ENCODE measurements at regions of chr17 and their contacts with region 1.

Region 1: GRCh38 chr17:64420143-64420971 is 28.6 kb upstream of the MILR1 start:
- DNase-seq: peak; percentile 76
- H3K4me3 ChIP-seq: no peak overlapping the region; a peak in 1 of 4 replicates
- H3K27ac ChIP-seq: no peak overlapping the region
- H3K4me1 ChIP-seq: peaks cover 0 to 8% of the 10 kb centered on the region in 2 experiments; a peak in 1 of 4 replicates
- H3K27me3 ChIP-seq: no peaks in the 10 kb centered on the region
- CTCF ChIP-seq: peak; percentile 97
- EP300 ChIP-seq: no peak
- RAD21 ChIP-seq: peak; percentile 91

Region 2: GRCh38 chr17:64291254-64291851 is 129.0 kb before region 1 on chr17:
- CTCF ChIA-PET with region 1: interaction called, 37 read pairs
- POLR2A ChIA-PET with region 1: no interaction called
- DNase-seq: no peak
- H3K4me3 ChIP-seq: no peak overlapping the region
- H3K27ac ChIP-seq: no peak overlapping the region
- H3K4me1 ChIP-seq: no peaks in the 10 kb centered on the region
- H3K27me3 ChIP-seq: no peaks in the 10 kb centered on the region
- CTCF ChIP-seq: peak; percentile 58
- EP300 ChIP-seq: no peak
- RAD21 ChIP-seq: peak; percentile 26

Region 3: DNA sequence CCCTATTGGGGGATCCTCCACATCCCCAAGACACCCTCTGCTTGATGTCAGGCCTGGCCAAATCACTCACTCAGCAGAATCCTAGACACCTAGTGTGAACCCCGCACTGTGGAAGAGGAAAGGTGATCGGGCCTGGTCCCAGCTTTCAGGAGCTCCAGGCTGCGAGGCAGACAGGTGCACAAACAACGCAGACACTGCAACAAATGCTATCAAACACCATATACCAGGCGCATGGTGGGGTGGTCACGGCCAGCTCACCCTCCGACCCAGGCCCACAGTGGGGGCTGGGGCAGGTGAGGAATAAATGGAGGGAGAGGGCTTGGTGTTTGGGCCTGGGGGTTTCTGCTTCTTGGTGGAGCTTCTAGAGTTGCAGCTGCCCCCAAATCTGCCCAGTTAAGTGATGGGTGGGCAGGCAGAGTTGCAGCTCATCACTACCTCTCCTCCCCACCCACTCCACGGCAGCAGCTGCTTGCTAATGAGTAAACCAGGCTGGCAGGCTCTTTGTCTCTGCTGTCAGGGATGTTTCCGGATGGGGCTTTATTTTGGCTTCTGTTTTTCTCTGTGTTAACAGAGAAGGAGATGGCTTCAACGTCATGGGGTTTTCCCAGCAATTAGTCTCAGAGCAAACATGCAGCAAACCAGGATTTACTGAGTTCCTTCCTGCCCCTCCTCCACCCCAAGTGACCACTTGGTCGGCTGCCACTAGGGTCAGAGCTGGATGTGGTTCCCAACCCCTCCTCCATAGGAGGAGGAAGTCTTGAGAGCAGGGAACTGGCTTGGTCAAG is 76.3 kb before region 1 on chr17:
- CTCF ChIA-PET with region 1: interaction called, 19 read pairs
- POLR2A ChIA-PET with region 1: no interaction called
- DNase-seq: no peak
- H3K4me3 ChIP-seq: no peak overlapping the region
- H3K27ac ChIP-seq: peak overlapping the region in 1 of 2 experiments; percentile 11; a peak in 1 of 4 replicates
- H3K4me1 ChIP-seq: peaks cover 8 to 10% of the 10 kb centered on the region in 2 experiments; a peak in 3 of 4 replicates
- H3K27me3 ChIP-seq: no peaks in the 10 kb centered on the region
- CTCF ChIP-seq: no peak
- EP300 ChIP-seq: peak in 1 of 2 experiments; percentile 16; a peak in 1 of 4 replicates
- RAD21 ChIP-seq: no peak

Region 4: DNA sequence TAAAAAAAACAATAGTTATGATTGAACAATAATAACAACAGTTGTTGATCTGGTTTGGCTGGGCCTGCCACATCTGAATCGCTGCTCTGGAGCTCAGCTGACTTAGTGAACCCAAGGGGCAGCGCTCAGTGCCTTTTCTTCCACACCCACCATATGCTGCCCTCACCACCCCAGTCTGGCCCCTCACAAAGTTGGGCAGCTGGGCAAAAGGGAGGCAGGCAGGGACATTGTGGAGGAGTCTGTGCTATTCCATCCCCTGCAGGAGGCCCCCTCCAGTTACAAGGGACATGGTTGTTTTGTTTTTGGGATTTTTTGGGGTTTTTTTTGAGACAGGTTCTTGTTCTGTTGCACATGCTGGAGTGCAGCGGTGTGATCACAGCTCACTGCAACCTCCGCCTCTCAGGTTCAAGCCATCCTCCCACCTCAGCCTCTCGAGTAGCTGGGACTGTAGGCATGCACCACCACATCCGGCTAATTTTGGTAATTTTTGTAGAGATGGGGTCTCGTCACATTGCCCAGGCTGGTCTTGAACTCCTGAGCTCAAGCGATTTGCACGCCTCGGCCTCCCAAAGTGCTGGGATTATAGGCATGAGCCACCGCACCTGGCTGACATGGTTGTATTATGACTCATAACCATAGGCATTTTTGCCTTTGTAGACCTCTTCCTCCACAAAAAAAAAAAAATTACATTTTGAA is 21.1 kb before region 1 on chr17:
- CTCF ChIA-PET with region 1: interaction called, 46 read pairs
- POLR2A ChIA-PET with region 1: no interaction called
- DNase-seq: no peak
- H3K4me3 ChIP-seq: no peak overlapping the region
- H3K27ac ChIP-seq: no peak overlapping the region
- H3K4me1 ChIP-seq: no peaks in the 10 kb centered on the region
- H3K27me3 ChIP-seq: no peaks in the 10 kb centered on the region
- CTCF ChIP-seq: no peak
- EP300 ChIP-seq: no peak
- RAD21 ChIP-seq: no peak

Region 5: DNA sequence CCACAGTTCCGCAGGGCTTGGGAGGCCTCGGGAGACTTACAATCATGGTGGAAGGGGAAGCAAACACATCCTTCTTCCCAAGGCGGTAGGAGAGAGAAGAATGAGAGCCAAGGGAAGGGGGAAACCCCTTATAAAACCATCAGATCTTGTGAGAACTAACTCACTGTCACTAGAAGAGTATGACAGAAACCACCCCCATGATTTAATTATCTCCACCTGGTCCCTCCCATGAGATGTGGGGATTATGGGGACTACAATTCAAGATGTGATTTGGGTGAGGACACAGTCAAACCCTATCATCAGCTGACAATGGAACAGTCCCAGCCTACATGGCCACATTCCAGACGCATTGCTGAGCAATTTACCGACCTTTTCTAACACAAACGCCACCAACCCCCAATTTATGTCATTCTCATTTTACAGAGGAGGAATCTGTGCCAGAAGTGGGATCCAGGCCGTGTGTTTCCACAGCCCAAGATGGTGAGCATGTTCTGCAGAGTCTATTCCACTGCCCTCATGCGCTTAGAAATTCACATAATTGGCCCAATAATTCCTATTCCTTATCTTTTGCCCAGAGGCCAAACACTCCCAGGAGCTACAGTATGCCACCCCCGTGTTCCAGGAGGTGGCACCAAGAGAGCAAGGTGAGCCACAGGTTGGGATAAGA is 45.8 kb after region 1 on chr17:
- CTCF ChIA-PET with region 1: interaction called, 13 read pairs
- POLR2A ChIA-PET with region 1: no interaction called
- DNase-seq: no peak
- H3K4me3 ChIP-seq: no peak overlapping the region
- H3K27ac ChIP-seq: no peak overlapping the region
- H3K4me1 ChIP-seq: no peaks in the 10 kb centered on the region
- H3K27me3 ChIP-seq: no peaks in the 10 kb centered on the region
- CTCF ChIP-seq: no peak
- EP300 ChIP-seq: no peak
- RAD21 ChIP-seq: no peak

Region 6: GRCh38 chr17:64648234-64648633 is 227.9 kb after region 1 on chr17:
- CTCF ChIA-PET with region 1: interaction called, 43 read pairs
- POLR2A ChIA-PET with region 1: no interaction called
- DNase-seq: no peak
- H3K4me3 ChIP-seq: no peak overlapping the region
- H3K27ac ChIP-seq: peak overlapping the region in 1 of 2 experiments; percentile 37; a peak in 1 of 4 replicates
- H3K4me1 ChIP-seq: peaks cover 3 to 14% of the 10 kb centered on the region in 2 experiments; a peak in 3 of 4 replicates
- H3K27me3 ChIP-seq: no peaks in the 10 kb centered on the region
- CTCF ChIP-seq: no peak
- EP300 ChIP-seq: no peak
- RAD21 ChIP-seq: no peak

Measured in SK-N-SH (cell line).